Mammary epithelial cell (primary cell): ENCODE measurements at regions of chr3 and their contacts with region 1.

Region 1: GRCh38 chr3:57939775-57940174 is 68.4 kb upstream of the FLNB start:
- DNase-seq: no peak
- H3K4me3 ChIP-seq: no peak overlapping the region
- H3K27ac ChIP-seq: no peak overlapping the region
- H3K4me1 ChIP-seq: no peaks in the 10 kb centered on the region
- H3K27me3 ChIP-seq: no peaks in the 10 kb centered on the region
- CTCF ChIP-seq: no peak

Region 2: GRCh38 chr3:58093573-58094195 is 153.9 kb after region 1 on chr3:
- CTCF ChIA-PET with region 1: no interaction called
- dilution Hi-C with region 1: no loop called
- in situ Hi-C with region 1: no loop called
- intact Hi-C with region 1: no loop called
- DNase-seq: peak; percentile 82
- H3K4me3 ChIP-seq: no peak overlapping the region
- H3K27ac ChIP-seq: no peak overlapping the region
- H3K4me1 ChIP-seq: no peaks in the 10 kb centered on the region
- H3K27me3 ChIP-seq: no peaks in the 10 kb centered on the region
- CTCF ChIP-seq: no peak

Region 3: DNA sequence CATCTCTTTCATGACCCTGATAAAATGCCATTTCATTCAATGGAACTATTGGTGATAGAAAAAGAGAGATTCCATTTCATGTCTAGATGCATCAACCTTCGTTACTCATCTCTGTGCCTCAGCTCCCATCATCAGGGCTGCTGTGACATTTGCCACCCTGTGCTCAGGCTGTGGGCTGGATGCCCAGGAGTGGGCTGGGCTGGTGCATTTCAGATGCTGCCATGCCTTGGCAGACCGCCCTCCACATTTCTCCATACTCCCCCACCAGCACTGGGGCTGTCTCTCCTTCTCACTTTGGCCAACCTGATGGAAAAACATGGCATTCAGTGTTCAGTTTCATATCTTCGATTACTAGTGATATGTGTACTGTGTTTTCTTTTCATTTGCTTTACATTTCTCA is 211.9 kb after region 1 on chr3:
- CTCF ChIA-PET with region 1: no interaction called
- dilution Hi-C with region 1: loop called (anchors 5 kb)
- in situ Hi-C with region 1: no loop called
- intact Hi-C with region 1: no loop called
- DNase-seq: no peak
- H3K4me3 ChIP-seq: no peak overlapping the region
- H3K27ac ChIP-seq: no peak overlapping the region
- H3K4me1 ChIP-seq: no peaks in the 10 kb centered on the region
- H3K27me3 ChIP-seq: no peaks in the 10 kb centered on the region
- CTCF ChIP-seq: no peak